SK-N-SH (cell line): ENCODE measurements at regions of chr3 and their contacts with region 1.

Region 1: DNA sequence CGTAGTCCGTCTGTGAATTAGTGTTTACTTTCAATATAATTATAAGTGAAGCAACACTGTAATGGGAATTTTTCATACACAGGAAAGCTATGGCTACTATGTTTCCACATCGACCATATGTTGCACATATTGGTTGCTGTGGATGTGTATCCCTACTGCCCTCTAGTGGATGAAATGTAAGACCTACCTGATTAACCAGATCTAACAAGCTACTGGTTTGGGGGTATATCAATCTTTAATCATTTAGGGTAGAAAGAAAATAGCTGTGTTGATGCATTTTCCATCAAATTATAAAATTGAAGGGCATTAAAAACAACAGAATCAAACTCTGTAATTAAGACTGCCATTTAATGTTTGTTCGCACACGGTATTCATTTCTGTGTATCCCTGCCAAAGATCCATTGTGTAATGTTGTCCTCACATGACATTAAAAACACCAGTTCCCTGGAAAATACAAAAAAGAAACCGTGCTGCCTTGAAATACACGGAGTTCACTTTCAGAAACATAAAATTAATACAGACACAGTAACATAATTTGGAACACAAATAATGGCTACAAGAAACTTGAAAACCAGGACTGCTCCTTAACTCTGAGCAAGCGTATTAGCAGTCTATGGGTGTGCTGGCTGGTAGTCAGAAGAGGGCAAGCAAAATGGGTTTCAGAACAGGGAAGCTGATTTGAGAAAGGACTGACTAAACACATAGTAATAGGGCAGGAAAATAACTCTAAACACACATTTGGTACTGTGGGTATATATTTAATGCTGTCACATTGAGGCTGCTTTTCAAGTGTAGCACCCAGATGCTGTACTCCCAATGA is 125.1 kb downstream of the TIGIT start:
- DNase-seq: peak; percentile 48
- H3K4me3 ChIP-seq: no peak overlapping the region; a peak in 1 of 4 replicates
- H3K27ac ChIP-seq: no peak overlapping the region; a peak in 1 of 4 replicates
- H3K4me1 ChIP-seq: no peaks in the 10 kb centered on the region
- H3K27me3 ChIP-seq: no peaks in the 10 kb centered on the region
- CTCF ChIP-seq: peak; percentile 84
- EP300 ChIP-seq: no peak
- RAD21 ChIP-seq: peak; percentile 82

Region 2: DNA sequence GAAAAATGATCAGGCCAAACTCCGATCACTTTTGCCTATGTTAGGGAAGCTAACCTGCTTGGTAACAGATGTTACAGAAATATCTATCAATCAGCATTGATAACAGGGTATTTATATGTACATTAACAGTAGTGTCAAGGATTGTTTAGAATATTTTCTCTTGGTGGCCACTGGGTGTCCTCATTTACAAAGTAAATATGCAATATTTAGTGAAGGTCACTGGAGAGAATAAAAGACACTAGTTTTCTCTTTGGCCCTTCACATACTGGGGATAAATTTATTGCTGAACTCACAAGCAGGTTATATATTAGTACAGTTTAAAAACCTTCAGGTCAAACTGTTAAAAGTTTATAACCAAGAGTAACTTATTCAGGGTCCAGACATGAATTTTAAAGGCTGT is 56.1 kb before region 1 on chr3:
- CTCF ChIA-PET with region 1: interaction called, 37 read pairs
- POLR2A ChIA-PET with region 1: no interaction called
- DNase-seq: peak; percentile 31
- H3K4me3 ChIP-seq: no peak overlapping the region
- H3K27ac ChIP-seq: 0 out of 4 replicates have a peak overlapping the region, but pooled peaks of 1 of the 2 experiments have one; percentile 58
- H3K4me1 ChIP-seq: peaks cover 0 to 11% of the 10 kb centered on the region in 2 experiments; a peak in 1 of 4 replicates
- H3K27me3 ChIP-seq: no peaks in the 10 kb centered on the region
- CTCF ChIP-seq: peak; percentile 66
- EP300 ChIP-seq: no peak
- RAD21 ChIP-seq: peak; percentile 68

Region 3: DNA sequence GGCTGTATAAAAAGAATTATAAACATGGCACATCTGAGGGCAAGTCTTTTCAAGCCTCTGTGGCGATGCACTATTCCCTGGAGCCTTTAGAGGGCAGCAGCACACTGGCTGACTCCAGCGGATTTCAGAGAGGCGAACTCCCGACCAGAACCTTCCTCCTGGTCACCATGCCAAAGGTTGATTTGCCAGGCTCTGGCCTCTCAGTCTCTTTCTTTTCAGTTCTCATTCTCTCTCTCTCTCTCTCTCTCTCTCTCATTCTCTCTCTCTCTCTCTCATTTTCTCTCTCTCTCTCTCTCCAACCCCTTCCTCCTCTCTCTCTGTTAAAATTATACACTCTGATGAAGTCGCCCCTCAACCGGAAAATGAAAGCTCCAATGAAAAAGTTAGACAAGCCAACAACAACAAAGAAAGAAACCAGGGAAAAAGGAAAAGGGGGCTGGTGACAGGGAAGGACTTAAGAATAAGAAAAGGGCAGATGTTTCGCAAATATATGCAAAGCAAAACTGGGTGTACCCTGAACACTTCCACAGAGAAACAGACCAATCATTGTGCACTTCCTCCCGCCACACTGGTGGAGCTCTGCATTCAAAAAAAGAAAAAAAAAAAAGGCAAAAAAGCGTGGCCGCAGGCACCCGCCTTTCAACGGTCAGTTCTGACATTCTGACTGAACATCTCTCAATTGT is 34.9 kb before region 1 on chr3:
- CTCF ChIA-PET with region 1: interaction called, 248 read pairs
- POLR2A ChIA-PET with region 1: no interaction called
- DNase-seq: peak; percentile 61
- H3K4me3 ChIP-seq: no peak overlapping the region; a peak in 1 of 4 replicates
- H3K27ac ChIP-seq: peak overlapping the region; percentile 8 to 37; a peak in 1 of 4 replicates
- H3K4me1 ChIP-seq: peaks cover 7 to 16% of the 10 kb centered on the region in 2 experiments; a peak in 2 of 4 replicates
- H3K27me3 ChIP-seq: no peaks in the 10 kb centered on the region
- CTCF ChIP-seq: peak; percentile 96
- EP300 ChIP-seq: no peak
- RAD21 ChIP-seq: peak; percentile 97

Region 4: GRCh38 chr3:114405202-114405990 is 13.5 kb before region 1 on chr3:
- CTCF ChIA-PET with region 1: interaction called, 85 read pairs
- POLR2A ChIA-PET with region 1: no interaction called
- DNase-seq: no peak
- H3K4me3 ChIP-seq: no peak overlapping the region
- H3K27ac ChIP-seq: peak overlapping the region in 1 of 2 experiments; percentile 46; a peak in 1 of 4 replicates
- H3K4me1 ChIP-seq: peaks cover 19 to 27% of the 10 kb centered on the region in 2 experiments; a peak in 3 of 4 replicates
- H3K27me3 ChIP-seq: no peaks in the 10 kb centered on the region
- CTCF ChIP-seq: no peak
- EP300 ChIP-seq: no peak
- RAD21 ChIP-seq: no peak

Region 5: GRCh38 chr3:114442246-114442645 is 23.3 kb after region 1 on chr3:
- CTCF ChIA-PET with region 1: interaction called, 12 read pairs
- POLR2A ChIA-PET with region 1: no interaction called
- DNase-seq: no peak
- H3K4me3 ChIP-seq: no peak overlapping the region
- H3K27ac ChIP-seq: peak overlapping the region; percentile 18 to 58; a peak in 3 of 4 replicates
- H3K4me1 ChIP-seq: peaks cover 6 to 46% of the 10 kb centered on the region in 2 experiments; a peak in 3 of 4 replicates
- H3K27me3 ChIP-seq: no peaks in the 10 kb centered on the region
- CTCF ChIP-seq: no peak
- EP300 ChIP-seq: 0 out of 4 replicates have a peak, but pooled peaks of 1 of the 2 experiments have one; percentile 36
- RAD21 ChIP-seq: no peak